Gastrocnemius medialis (tissue), 4 donors: ENCODE measurements at regions of chr7 and their contacts with region 1.

Region 1: GRCh38 chr7:144391823-144392255 is 11.7 kb downstream of the NOBOX start:
- DNase-seq: no peak
- ATAC-seq: peak; percentile 58 to 86
- H3K4me3 ChIP-seq: peak overlapping the region in 1 of 4 donors; percentile 11
- H3K27ac ChIP-seq: no peak overlapping the region
- H3K4me1 ChIP-seq: no peaks in the 10 kb centered on the region
- H3K27me3 ChIP-seq: no peaks in the 10 kb centered on the region
- CTCF ChIP-seq: peak; percentile 23 to 68 (median 49)
- POLR2A ChIP-seq: no peak

Region 2: GRCh38 chr7:144158861-144159260 is 233.0 kb before region 1 on chr7:
- in situ Hi-C with region 1: loop called in 1 of 4 experiments (anchors 25 kb)
- intact Hi-C with region 1: no loop called
- DNase-seq: no peak
- ATAC-seq: no peak
- H3K4me3 ChIP-seq: no peak overlapping the region
- H3K27ac ChIP-seq: no peak overlapping the region
- H3K4me1 ChIP-seq: no peaks in the 10 kb centered on the region
- H3K27me3 ChIP-seq: no peaks in the 10 kb centered on the region
- CTCF ChIP-seq: no peak
- POLR2A ChIP-seq: no peak

Region 3: GRCh38 chr7:144378651-144379050 is 13.2 kb before region 1 on chr7:
- in situ Hi-C with region 1: no loop called
- intact Hi-C with region 1: no loop called
- DNase-seq: no peak
- ATAC-seq: no peak
- H3K4me3 ChIP-seq: no peak overlapping the region
- H3K27ac ChIP-seq: no peak overlapping the region
- H3K4me1 ChIP-seq: no peaks in the 10 kb centered on the region
- H3K27me3 ChIP-seq: no peaks in the 10 kb centered on the region
- CTCF ChIP-seq: no peak
- POLR2A ChIP-seq: no peak